ENCODE measurements at regions of chr11 and their contacts with region 1.

Region 1: GRCh38 chr11:65117216-65118096 is at the start of gene ZNHIT2:
- DNase-seq: peak; percentile 100
- H3K4me3 Mint-ChIP-seq: peak within 1 kb of the TSS; percentile 86
- H3K27ac Mint-ChIP-seq: peak within 1 kb of the TSS; percentile 95
- H3K4me1 Mint-ChIP-seq: peaks cover 68% of the 10 kb centered on the region
- H3K27me3 Mint-ChIP-seq: no peaks in the 10 kb centered on the region
- total RNA-seq, gene ZNHIT2: 9.3 to 9.7 TPM

Region 2: DNA sequence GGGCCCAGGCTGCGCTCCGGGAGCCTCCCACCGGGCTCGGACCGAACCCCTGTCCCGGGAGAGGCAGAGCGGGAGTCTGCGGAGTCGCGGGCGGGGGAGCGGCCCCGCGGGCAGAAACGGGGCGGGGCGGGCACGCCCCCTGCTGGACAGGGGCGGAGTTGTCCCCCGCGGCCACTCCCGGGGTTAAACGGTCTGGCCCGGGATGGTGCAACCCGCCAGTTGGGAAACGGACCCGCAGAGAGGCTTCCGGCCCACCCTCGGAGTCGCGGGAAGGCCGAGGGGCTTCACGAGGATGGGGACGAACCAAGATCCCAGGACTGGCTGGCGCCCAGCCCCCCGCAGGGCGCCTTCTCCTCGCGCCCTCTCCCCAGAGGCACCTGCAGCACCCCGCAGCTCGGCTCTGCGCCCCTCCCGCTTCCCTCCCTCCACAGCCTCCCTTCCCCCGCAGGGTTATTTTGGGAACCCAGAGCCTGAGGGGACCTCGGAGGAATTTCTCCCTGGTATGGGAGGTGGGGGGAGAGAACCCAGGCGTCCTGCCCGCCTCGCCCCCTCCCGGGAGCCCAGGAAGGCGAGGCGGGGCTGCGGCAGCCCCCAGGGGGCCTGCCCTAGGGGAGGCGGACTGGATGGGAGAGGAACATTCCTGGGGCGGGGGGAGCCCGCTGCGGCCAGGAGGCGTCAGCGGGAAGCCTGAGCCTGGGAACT is 374.4 kb before region 1 on chr11:
- CTCF ChIA-PET with region 1: no interaction called
- POLR2A ChIA-PET with region 1: no interaction called
- intact Hi-C with region 1: loop called (anchors 10 kb)
- DNase-seq: peak; percentile 84
- H3K4me3 Mint-ChIP-seq: peak overlapping the region; percentile 37
- H3K27ac Mint-ChIP-seq: no peak overlapping the region
- H3K4me1 Mint-ChIP-seq: peaks cover 25% of the 10 kb centered on the region
- H3K27me3 Mint-ChIP-seq: peaks cover 8% of the 10 kb centered on the region

Region 3: GRCh38 chr11:64864473-64865285 is 252.8 kb before region 1 on chr11:
- CTCF ChIA-PET with region 1: interaction called, 3 read pairs
- POLR2A ChIA-PET with region 1: interaction called, 3 read pairs
- intact Hi-C with region 1: loop called (anchors 2 kb)
- DNase-seq: peak; percentile 90
- H3K4me3 Mint-ChIP-seq: peak overlapping the region; percentile 67
- H3K27ac Mint-ChIP-seq: peak overlapping the region; percentile 96
- H3K4me1 Mint-ChIP-seq: peaks cover 93% of the 10 kb centered on the region
- H3K27me3 Mint-ChIP-seq: no peaks in the 10 kb centered on the region

Region 4: DNA sequence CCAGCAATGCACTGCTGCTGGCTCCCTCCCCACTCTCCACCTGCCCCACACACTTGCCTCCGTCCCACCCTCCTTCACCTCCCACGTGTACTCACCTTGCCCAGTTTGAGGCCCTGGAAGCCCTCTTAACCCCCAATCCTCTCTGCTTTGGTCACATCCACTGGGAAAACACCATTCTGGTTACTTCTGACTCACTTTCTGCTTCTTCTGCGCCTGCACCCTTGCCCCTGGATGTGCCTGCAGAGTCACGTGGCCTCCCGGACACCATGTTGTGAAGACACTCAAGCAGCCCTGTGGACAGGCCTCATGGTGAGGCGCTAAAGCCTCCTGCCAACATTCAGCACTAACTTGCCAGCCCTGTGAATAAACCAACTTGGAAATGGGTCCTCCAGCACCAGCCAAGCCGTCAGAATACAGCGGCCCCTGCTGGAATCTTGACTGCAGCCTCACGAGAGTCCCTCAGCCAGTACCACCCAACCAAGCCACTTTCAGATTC is 56.5 kb before region 1 on chr11:
- CTCF ChIA-PET with region 1: no interaction called
- POLR2A ChIA-PET with region 1: no interaction called
- intact Hi-C with region 1: no loop called
- DNase-seq: no peak
- H3K4me3 Mint-ChIP-seq: no peak overlapping the region
- H3K27ac Mint-ChIP-seq: no peak overlapping the region
- H3K4me1 Mint-ChIP-seq: no peaks in the 10 kb centered on the region
- H3K27me3 Mint-ChIP-seq: no peaks in the 10 kb centered on the region

Region 5: GRCh38 chr11:65083834-65084597 is 33.4 kb before region 1 on chr11 and contains the starts of genes CDCA5 and ZFPL1:
- CTCF ChIA-PET with region 1: interaction called, 7 read pairs
- POLR2A ChIA-PET with region 1: interaction called, 5 read pairs
- intact Hi-C with region 1: loop called (anchors 1 kb)
- DNase-seq: peak; percentile 97
- H3K4me3 Mint-ChIP-seq: peak within 1 kb of the TSS; percentile 99
- H3K27ac Mint-ChIP-seq: peak within 1 kb of the TSS; percentile 96
- H3K4me1 Mint-ChIP-seq: peaks cover 36% of the 10 kb centered on the region
- H3K27me3 Mint-ChIP-seq: no peaks in the 10 kb centered on the region
- total RNA-seq, gene CDCA5: 111 to 112 TPM
- total RNA-seq, gene ZFPL1: 28.3 to 31.3 TPM

Region 6: DNA sequence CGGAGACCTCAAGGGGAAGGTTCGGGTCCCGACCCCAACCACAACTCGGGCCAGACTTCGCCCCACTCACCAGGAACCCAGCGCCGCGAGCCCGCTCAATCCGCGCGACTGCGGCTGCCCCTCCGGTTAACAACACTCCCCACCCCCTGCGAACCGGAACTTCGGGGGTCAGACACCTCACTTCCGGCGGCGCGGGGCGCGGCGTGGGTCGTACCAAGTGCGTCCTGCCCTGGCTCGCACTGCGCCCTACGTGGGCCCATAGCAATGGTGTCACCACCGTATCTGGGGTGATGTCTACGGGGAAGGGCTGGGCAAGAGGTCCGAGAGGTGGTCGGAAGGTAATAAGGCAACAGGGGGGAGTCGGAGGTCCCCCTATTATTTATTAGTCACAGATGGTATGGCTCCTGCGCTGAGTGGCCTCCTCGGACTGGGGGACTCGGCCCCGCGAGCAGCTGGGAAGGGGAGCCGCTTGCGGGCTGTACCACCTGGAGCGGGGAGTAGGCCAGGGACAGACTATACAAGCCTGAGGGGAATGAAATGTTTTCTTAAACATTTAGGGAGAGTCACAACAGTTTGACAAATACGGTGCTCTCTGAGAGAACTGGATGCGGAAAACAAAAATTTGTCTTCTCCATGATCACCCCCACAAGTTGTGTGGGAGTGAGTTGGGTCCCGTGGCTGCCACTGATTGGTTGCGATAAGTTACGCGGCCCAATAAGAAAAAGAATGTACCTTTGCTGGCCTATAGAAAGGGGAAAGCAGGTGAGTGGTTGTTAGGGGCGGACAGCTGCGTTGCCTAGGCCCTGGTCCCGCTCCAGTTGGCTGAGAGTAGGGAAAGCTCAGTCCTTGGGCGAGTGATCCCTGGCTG is 17.2 kb after region 1 on chr11 and contains the start of gene SYVN1:
- CTCF ChIA-PET with region 1: interaction called, 24 read pairs
- POLR2A ChIA-PET with region 1: interaction called, 32 read pairs
- intact Hi-C with region 1: loop called (anchors 1 kb)
- DNase-seq: peak; percentile 94
- H3K4me3 Mint-ChIP-seq: peak within 1 kb of the TSS; percentile 99
- H3K27ac Mint-ChIP-seq: peak within 1 kb of the TSS; percentile 99
- H3K4me1 Mint-ChIP-seq: peaks cover 31% of the 10 kb centered on the region
- H3K27me3 Mint-ChIP-seq: no peaks in the 10 kb centered on the region
- total RNA-seq, gene SYVN1: 24.5 to 26.2 TPM